ENCODE measurements at regions of chr10 and their contacts with region 1.

Region 1: DNA sequence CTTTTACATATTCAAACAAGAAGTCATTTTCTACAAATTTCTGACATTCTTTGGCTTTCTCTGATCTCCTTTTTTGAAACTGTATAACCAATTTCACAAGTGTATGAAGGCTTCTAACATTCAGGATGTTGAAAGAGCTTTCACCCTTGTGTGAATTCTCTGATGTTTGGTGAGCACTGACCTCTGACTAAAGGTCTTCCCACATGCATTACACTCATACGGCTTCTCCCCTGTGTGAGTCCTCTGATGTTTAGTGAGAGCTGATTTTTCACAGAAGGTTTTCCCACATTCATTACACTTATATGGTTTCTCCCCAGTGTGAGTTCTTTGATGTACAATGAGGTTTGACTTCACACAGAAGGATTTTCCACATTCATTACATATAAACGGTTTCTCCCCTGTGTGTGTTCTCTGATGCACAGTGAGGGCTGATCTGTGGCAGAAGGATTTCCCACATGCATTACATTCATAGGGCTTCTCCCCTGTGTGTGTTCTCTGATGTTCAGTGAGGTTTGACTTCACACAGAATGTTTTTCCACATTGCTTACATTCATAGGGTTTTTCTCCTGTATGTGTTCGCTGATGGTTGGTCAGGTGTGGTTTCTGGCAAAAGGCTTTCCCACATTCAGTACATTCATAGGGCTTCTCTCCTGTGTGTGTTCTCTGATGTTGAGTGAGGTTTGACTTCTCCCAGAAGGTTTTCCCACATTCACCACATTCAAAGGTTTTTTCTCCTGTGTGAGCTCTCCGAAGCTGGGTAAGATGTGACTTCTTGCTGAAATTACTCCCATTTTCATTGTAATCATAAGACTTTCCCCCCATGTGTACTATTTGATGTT is 25.7 kb downstream of the ZNF248 start:
- DNase-seq: no peak
- ATAC-seq: no peak
- H3K4me3 Mint-ChIP-seq: no peak overlapping the region
- H3K27ac Mint-ChIP-seq: no peak overlapping the region
- H3K4me1 Mint-ChIP-seq: no peaks in the 10 kb centered on the region
- H3K27me3 Mint-ChIP-seq: no peaks in the 10 kb centered on the region

Region 2: GRCh38 chr10:37803269-37803668 is 28.4 kb before region 1 on chr10:
- CTCF ChIA-PET with region 1: no interaction called
- POLR2A ChIA-PET with region 1: no interaction called
- intact Hi-C with region 1: no loop called
- DNase-seq: no peak
- ATAC-seq: no peak
- H3K4me3 Mint-ChIP-seq: no peak overlapping the region
- H3K27ac Mint-ChIP-seq: no peak overlapping the region
- H3K4me1 Mint-ChIP-seq: no peaks in the 10 kb centered on the region
- H3K27me3 Mint-ChIP-seq: no peaks in the 10 kb centered on the region

Region 3: GRCh38 chr10:38127812-38128211 is 296.1 kb after region 1 on chr10:
- CTCF ChIA-PET with region 1: no interaction called
- POLR2A ChIA-PET with region 1: no interaction called
- intact Hi-C with region 1: loop called in 1 of 2 experiments (anchors 10 kb)
- DNase-seq: no peak
- ATAC-seq: no peak
- H3K4me3 Mint-ChIP-seq: no peak overlapping the region
- H3K27ac Mint-ChIP-seq: no peak overlapping the region
- H3K4me1 Mint-ChIP-seq: no peaks in the 10 kb centered on the region
- H3K27me3 Mint-ChIP-seq: no peaks in the 10 kb centered on the region

Measured in activated CD4-positive, alpha-beta T cell treated with anti-CD3 and anti-CD28 coated beads for 36 hours (primary cell).